ENCODE measurements at regions of chr9 and their contacts with region 1.

Region 1: DNA sequence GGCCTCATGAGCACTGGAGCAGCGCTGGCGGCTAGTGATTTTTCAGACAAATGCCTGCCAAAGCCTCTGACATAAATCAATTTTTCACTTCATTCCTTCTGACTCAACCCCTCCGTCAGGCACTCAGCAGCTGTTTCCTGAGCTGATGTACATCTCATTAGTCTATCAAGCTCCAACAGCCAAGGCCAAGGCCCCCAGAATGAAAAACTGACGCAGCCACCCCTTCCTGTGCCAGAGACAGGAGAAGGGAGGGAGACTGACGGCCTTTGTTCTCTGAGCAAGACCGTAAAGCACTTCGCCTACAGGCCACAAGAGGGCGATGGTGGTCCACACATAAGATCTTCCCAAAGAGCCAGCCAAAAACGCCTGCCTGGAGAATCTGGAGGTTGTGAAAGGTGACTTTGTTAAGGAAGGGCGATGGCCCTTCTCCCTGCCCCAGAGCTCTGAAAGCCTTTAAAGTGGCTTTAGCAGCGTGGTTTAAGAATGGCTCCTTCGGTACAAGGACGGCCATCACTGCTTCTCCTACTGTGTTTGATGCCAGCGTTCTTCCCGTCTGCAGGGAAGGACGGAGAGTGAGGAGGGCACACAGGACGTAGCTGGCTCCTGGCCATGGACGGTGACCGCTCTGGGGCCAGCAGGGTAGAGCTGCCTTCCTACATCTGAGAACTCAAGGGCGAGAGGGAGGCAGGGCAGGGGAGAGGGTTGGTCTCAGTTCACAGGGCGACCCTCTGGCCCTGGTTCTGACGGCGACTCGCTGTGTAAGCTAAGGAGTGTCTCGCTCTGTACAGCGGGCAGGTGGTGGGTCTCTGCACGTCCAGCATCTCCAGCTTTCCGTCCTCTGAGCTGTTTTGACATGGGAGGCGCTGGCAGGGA is 37.0 kb downstream of the ALG2 start:
- DNase-seq: peak; percentile 80
- ATAC-seq: peak; percentile 93
- H3K4me3 ChIP-seq: peak overlapping the region; percentile 21 to 74 (median 46); a peak in 5 of 6 replicates
- H3K27ac ChIP-seq: no peak overlapping the region
- H3K4me1 ChIP-seq: peaks cover 11% of the 10 kb centered on the region
- H3K27me3 ChIP-seq: peaks cover 0 to 23% of the 10 kb centered on the region in 2 experiments; a peak in 2 of 5 replicates
- CTCF ChIP-seq: peak; percentile 91
- EP300 ChIP-seq: no peak
- POLR2A ChIP-seq: no peak
- RAD21 ChIP-seq: peak; percentile 85

Region 2: DNA sequence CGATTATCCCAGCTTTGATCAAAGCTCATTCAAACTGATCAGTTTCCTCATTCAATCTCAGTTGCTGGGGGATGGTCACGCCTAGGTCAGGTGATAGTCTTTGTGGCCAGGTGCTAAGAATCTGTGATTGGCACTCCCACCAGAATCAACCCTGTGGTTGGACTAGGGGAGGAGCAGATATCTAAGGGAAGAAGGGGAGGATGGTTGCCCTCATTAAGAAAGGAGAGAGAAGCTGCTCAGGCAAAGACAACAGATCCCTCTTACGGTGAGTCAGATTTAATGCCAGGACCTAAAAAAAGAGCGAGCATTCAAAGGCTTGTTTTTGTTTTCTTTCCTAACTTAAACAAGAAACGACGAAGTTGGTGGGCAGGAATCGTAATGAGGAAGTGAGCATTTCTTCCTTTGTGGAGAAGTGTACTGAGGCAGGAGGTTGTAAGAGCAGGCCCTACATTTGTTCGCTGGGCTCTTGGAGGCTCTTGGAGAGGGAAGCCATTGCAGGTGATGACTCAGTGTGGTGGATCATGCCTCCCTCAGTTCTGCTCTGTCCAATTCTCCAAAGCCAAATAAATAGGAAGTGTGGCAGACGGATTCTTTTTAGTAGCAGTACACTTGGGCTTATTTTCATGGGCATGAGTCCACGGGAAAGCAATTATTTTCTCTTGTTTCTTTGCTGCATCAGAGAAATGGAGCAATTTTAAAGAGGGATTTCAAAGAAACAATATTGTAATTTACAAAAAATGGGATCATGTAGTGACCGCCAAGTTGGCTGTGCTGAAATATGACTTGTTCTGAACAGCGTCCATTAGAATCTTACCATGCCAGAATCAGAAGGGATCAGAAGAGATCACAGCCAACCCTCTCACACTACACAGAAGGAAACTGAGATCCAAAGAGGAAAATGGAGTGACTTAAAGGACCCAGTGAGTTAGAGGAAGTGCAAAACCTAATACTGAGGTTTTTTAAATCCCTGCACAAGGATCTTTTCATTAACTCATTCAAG is 98.5 kb before region 1 on chr9:
- CTCF ChIA-PET with region 1: no interaction called
- POLR2A ChIA-PET with region 1: no interaction called
- in situ Hi-C with region 1: no loop called
- intact Hi-C with region 1: no loop called
- DNase-seq: no peak
- ATAC-seq: no peak
- H3K4me3 ChIP-seq: no peak overlapping the region
- H3K27ac ChIP-seq: no peak overlapping the region
- H3K4me1 ChIP-seq: no peaks in the 10 kb centered on the region
- H3K27me3 ChIP-seq: peaks cover 2 to 22% of the 10 kb centered on the region in 2 experiments; a peak in 3 of 5 replicates
- CTCF ChIP-seq: no peak
- EP300 ChIP-seq: no peak
- POLR2A ChIP-seq: no peak
- RAD21 ChIP-seq: no peak

Region 3: DNA sequence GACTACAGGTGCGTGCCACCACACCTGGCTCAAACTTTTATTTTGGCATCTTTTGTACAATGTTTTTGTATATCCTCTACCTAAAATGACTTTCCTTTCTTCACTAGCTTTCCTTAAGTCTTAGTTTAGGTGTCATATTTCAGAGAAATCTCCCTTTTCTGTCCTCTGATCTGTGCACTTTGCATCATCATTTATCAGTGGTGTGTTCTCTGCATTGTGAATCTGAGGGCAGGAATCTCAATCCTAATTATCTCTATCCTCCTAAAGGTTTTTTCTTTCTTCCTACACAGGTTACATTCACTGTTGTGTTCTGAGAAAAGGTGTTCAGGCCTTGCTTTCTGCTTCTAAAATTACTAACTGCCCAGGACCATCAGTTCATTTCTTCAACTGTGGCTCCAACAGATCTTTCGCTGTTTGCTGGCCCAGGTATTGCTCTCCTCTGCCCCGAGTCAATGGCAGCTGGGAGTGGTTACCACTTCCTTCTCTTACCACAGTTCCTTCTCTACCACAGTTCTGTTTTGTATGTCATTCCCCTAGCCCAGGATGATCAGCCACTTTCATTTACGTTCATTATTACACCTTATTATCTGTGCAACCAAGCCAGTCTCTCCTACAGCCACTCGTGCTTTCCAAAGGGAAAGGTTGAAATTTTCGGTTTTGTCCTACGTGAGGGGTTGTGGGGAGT is 65.8 kb before region 1 on chr9:
- CTCF ChIA-PET with region 1: no interaction called
- POLR2A ChIA-PET with region 1: no interaction called
- in situ Hi-C with region 1: no loop called
- intact Hi-C with region 1: no loop called
- DNase-seq: no peak
- ATAC-seq: no peak
- H3K4me3 ChIP-seq: no peak overlapping the region
- H3K27ac ChIP-seq: no peak overlapping the region
- H3K4me1 ChIP-seq: no peaks in the 10 kb centered on the region
- H3K27me3 ChIP-seq: no peaks in the 10 kb centered on the region
- CTCF ChIP-seq: no peak
- EP300 ChIP-seq: no peak
- POLR2A ChIP-seq: no peak
- RAD21 ChIP-seq: no peak

Region 4: GRCh38 chr9:99162759-99163364 is 21.8 kb before region 1 on chr9:
- CTCF ChIA-PET with region 1: interaction called, 5 read pairs
- POLR2A ChIA-PET with region 1: no interaction called
- in situ Hi-C with region 1: no loop called
- intact Hi-C with region 1: loop called (anchors 1 kb)
- DNase-seq: peak; percentile 43
- ATAC-seq: peak; percentile 25; the same call in 1 of the 3 replicates
- H3K4me3 ChIP-seq: no peak overlapping the region
- H3K27ac ChIP-seq: no peak overlapping the region
- H3K4me1 ChIP-seq: peaks cover 11% of the 10 kb centered on the region
- H3K27me3 ChIP-seq: no peaks in the 10 kb centered on the region; a peak in 1 of 5 replicates
- CTCF ChIP-seq: peak; percentile 75
- EP300 ChIP-seq: no peak
- POLR2A ChIP-seq: no peak
- RAD21 ChIP-seq: peak; percentile 63

Region 5: GRCh38 chr9:99231711-99232110 is 47.0 kb after region 1 on chr9:
- CTCF ChIA-PET with region 1: no interaction called
- POLR2A ChIA-PET with region 1: no interaction called
- in situ Hi-C with region 1: no loop called
- intact Hi-C with region 1: no loop called
- DNase-seq: peak; percentile 9
- ATAC-seq: peak; percentile 77
- H3K4me3 ChIP-seq: no peak overlapping the region
- H3K27ac ChIP-seq: no peak overlapping the region
- H3K4me1 ChIP-seq: peaks cover 10% of the 10 kb centered on the region
- H3K27me3 ChIP-seq: no peaks in the 10 kb centered on the region
- CTCF ChIP-seq: peak; percentile 61
- EP300 ChIP-seq: no peak
- POLR2A ChIP-seq: 0 out of 4 replicates have a peak, but pooled peaks of 1 of the 2 experiments have one; percentile 21
- RAD21 ChIP-seq: no peak; the same call in 1 of the 2 replicates

Region 6: GRCh38 chr9:99266255-99267023 is 81.7 kb after region 1 on chr9:
- CTCF ChIA-PET with region 1: no interaction called
- POLR2A ChIA-PET with region 1: no interaction called
- in situ Hi-C with region 1: no loop called
- intact Hi-C with region 1: loop called (anchors 10 kb)
- DNase-seq: peak; percentile 65
- ATAC-seq: peak; percentile 91
- H3K4me3 ChIP-seq: peak overlapping the region in 1 of 3 experiments; percentile 36; a peak in 1 of 6 replicates
- H3K27ac ChIP-seq: no peak overlapping the region
- H3K4me1 ChIP-seq: peaks cover 12% of the 10 kb centered on the region
- H3K27me3 ChIP-seq: no peaks in the 10 kb centered on the region
- CTCF ChIP-seq: peak; percentile 96
- EP300 ChIP-seq: peak in 1 of 2 experiments; percentile 28; a peak in 1 of 4 replicates
- POLR2A ChIP-seq: no peak
- RAD21 ChIP-seq: peak; percentile 87

Region 7: DNA sequence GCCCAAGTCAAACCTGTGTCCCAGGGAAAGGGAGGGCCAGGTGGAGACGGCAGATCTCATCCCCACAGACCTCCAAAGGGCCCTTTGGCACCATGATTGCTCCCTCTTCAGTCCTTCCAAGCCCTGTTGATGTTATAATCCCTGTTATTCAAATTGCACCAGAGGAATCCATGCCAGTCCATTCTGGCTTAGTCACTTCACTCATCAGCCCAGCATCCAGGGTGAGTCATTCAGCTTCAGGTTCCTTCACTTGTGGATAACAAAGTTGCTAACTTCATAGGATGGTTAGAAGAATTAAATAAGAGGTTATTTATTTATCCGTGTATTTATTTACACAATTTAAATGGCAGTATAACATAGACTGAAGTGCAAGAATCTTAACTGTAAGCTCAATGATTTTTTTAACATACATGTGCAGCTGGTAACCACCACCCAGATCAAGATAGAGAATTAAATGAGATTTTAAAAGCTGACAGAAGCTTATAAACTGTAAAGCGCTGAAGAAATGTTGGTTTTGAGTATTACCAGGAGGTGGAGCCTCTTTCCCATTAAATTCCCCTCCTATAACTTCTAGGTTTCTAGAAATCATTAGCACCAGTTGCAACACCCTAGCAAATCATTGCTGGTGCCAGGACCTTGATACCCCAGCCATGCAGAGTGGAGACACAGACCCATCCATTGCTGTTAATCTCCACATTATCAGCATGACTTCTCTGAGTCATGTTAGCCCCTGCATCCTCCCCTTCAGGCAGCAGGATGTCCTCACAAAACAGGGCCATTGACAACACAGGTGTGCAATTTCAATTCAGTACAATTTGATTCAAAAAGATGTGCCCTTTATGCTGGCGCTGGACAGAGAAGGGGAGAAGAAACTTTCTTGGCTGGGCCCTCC is 114.7 kb after region 1 on chr9:
- CTCF ChIA-PET with region 1: no interaction called
- POLR2A ChIA-PET with region 1: no interaction called
- in situ Hi-C with region 1: no loop called
- intact Hi-C with region 1: no loop called
- DNase-seq: peak; percentile 7
- ATAC-seq: peak; percentile 77
- H3K4me3 ChIP-seq: no peak overlapping the region
- H3K27ac ChIP-seq: no peak overlapping the region
- H3K4me1 ChIP-seq: no peaks in the 10 kb centered on the region
- H3K27me3 ChIP-seq: peaks cover 0 to 3% of the 10 kb centered on the region in 2 experiments; a peak in 2 of 5 replicates
- CTCF ChIP-seq: no peak
- EP300 ChIP-seq: no peak
- POLR2A ChIP-seq: no peak
- RAD21 ChIP-seq: no peak

Region 8: GRCh38 chr9:99807276-99807852 is 622.7 kb after region 1 on chr9:
- CTCF ChIA-PET with region 1: no interaction called
- POLR2A ChIA-PET with region 1: no interaction called
- in situ Hi-C with region 1: loop called (anchors 10 kb)
- intact Hi-C with region 1: loop called (anchors 5 kb)
- DNase-seq: peak; percentile 50
- ATAC-seq: peak; percentile 68
- H3K4me3 ChIP-seq: no peak overlapping the region
- H3K27ac ChIP-seq: no peak overlapping the region
- H3K4me1 ChIP-seq: no peaks in the 10 kb centered on the region
- H3K27me3 ChIP-seq: no peaks in the 10 kb centered on the region
- CTCF ChIP-seq: peak; percentile 67
- EP300 ChIP-seq: no peak
- POLR2A ChIP-seq: no peak
- RAD21 ChIP-seq: peak; percentile 28; the same call in 1 of the 2 replicates